Naive thymus-derived CD4-positive, alpha-beta T cell (primary cell): ENCODE measurements at regions of chr15 and their contacts with region 1.

Region 1: GRCh38 chr15:79989682-79990081 is 18.7 kb upstream of the BCL2A1 start:
- DNase-seq: no peak
- ATAC-seq: peak; percentile 71
- H3K4me3 ChIP-seq: no peak overlapping the region
- H3K4me3 Mint-ChIP-seq: no peak overlapping the region
- H3K27ac ChIP-seq: no peak overlapping the region
- H3K27ac Mint-ChIP-seq: peak overlapping the region in 1 of 9 donors; percentile 9
- H3K4me1 ChIP-seq: no peaks in the 10 kb centered on the region
- H3K4me1 Mint-ChIP-seq: peaks cover 0 to 7% (median 5%) of the 10 kb centered on the region in 7 donors
- H3K27me3 ChIP-seq: no peaks in the 10 kb centered on the region
- H3K27me3 Mint-ChIP-seq: no peaks in the 10 kb centered on the region

Region 2: GRCh38 chr15:79673416-79674123 is 316.1 kb before region 1 on chr15:
- CTCF ChIA-PET with region 1: no interaction called
- POLR2A ChIA-PET with region 1: no interaction called
- intact Hi-C with region 1: loop called in 1 of 2 experiments (anchors 10 kb)
- DNase-seq: no peak
- ATAC-seq: no peak
- H3K4me3 ChIP-seq: no peak overlapping the region
- H3K4me3 Mint-ChIP-seq: no peak overlapping the region
- H3K27ac ChIP-seq: no peak overlapping the region
- H3K27ac Mint-ChIP-seq: no peak overlapping the region
- H3K4me1 ChIP-seq: no peaks in the 10 kb centered on the region
- H3K4me1 Mint-ChIP-seq: peaks cover 0 to 5% (median 0%) of the 10 kb centered on the region in 7 donors
- H3K27me3 ChIP-seq: no peaks in the 10 kb centered on the region
- H3K27me3 Mint-ChIP-seq: peaks cover 17 to 48% (median 32%) of the 10 kb centered on the region in 5 donors

Region 3: DNA sequence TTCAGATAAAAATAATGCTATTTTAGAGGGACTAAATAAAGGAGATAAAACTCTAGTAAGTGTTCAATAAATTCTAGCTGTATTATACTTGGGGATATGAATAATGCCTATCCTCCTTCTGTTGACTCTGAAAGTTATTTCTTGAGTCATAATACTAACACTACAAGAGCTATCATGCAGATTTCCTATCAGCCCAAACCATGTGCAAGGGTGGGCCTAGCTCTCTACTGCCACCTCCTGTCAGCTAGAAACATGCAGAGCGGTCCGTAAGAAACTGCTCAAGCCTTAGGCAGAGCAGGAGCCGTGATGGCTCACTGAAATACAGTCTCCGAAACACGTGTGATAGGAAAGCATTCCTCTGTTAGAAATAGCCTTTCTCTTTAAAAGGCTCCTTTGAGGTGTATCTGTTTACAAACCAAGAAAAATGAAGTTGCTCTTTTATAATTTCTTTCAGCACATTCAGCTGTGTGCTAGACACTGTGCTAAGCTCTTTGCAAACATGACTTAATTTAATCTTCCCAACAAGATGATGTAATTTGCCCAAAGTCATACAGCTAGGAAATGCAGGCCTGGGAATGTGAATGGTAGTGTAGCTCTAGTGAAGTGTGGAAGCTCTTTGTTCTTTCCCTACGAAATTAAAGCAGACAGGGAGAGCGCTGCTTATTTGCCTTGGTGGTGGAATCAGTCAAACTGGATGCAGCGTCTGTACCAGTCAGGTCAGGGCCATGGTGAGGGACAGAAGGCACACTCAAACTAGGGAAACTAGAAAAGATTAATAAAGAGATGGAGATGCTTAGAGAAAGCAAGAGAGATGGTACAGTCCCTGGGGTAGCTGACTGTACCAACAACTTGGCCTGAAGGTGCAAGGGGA is 136.0 kb before region 1 on chr15:
- CTCF ChIA-PET with region 1: interaction called, 14 read pairs
- POLR2A ChIA-PET with region 1: no interaction called
- intact Hi-C with region 1: loop called (anchors 1 kb)
- DNase-seq: peak in 8 of 9 donors; percentile 15 to 61 (median 49)
- ATAC-seq: peak; percentile 97
- H3K4me3 ChIP-seq: no peak overlapping the region
- H3K4me3 Mint-ChIP-seq: no peak overlapping the region
- H3K27ac ChIP-seq: no peak overlapping the region
- H3K27ac Mint-ChIP-seq: peak overlapping the region in 4 of 9 donors; percentile 0 to 47 (median 30)
- H3K4me1 ChIP-seq: no peaks in the 10 kb centered on the region
- H3K4me1 Mint-ChIP-seq: peaks cover 6 to 43% (median 32%) of the 10 kb centered on the region in 7 donors
- H3K27me3 ChIP-seq: no peaks in the 10 kb centered on the region
- H3K27me3 Mint-ChIP-seq: no peaks in the 10 kb centered on the region

Region 4: DNA sequence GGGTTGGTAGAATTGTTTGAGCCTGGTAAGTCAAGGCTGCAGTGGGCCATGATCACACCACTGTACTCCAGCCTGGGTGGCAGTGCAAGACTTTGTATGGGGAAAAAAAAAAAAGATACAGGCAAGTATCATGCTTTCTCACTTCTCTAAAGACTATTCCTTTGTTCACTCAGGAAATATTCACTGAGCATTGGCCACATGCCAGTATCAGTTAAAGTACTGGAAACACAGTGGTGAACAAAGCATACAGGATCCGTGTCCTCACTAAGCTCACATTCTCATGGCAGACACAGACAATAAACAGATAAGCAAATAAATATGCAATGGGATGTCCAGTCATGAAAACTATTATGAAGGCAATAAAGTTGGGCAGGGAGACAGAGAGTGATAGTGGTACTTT is 87.7 kb before region 1 on chr15:
- CTCF ChIA-PET with region 1: interaction called, 10 read pairs
- POLR2A ChIA-PET with region 1: interaction called, 27 read pairs
- intact Hi-C with region 1: loop called in 1 of 2 experiments (anchors 1 kb)
- DNase-seq: no peak
- ATAC-seq: no peak
- H3K4me3 ChIP-seq: no peak overlapping the region
- H3K4me3 Mint-ChIP-seq: no peak overlapping the region
- H3K27ac ChIP-seq: no peak overlapping the region
- H3K27ac Mint-ChIP-seq: peak overlapping the region in 1 of 9 donors; percentile 25
- H3K4me1 ChIP-seq: peaks cover 6 to 8% of the 10 kb centered on the region in 2 donors
- H3K4me1 Mint-ChIP-seq: peaks cover 0 to 42% (median 13%) of the 10 kb centered on the region in 7 donors
- H3K27me3 ChIP-seq: no peaks in the 10 kb centered on the region
- H3K27me3 Mint-ChIP-seq: no peaks in the 10 kb centered on the region

Region 5: GRCh38 chr15:79953951-79954444 is 35.7 kb before region 1 on chr15:
- CTCF ChIA-PET with region 1: interaction called, 4 read pairs
- POLR2A ChIA-PET with region 1: interaction called, 3 read pairs
- intact Hi-C with region 1: loop called in 1 of 2 experiments (anchors 5 kb)
- DNase-seq: peak in 2 of 9 donors; percentile 7 to 27
- ATAC-seq: peak; percentile 82
- H3K4me3 ChIP-seq: no peak overlapping the region
- H3K4me3 Mint-ChIP-seq: peak overlapping the region in 2 of 10 donors; percentile 0 to 16
- H3K27ac ChIP-seq: no peak overlapping the region
- H3K27ac Mint-ChIP-seq: peak overlapping the region in 7 of 9 donors; percentile 1 to 79 (median 62)
- H3K4me1 ChIP-seq: peaks cover 0 to 10% of the 10 kb centered on the region in 2 donors
- H3K4me1 Mint-ChIP-seq: peaks cover 14 to 26% (median 21%) of the 10 kb centered on the region in 7 donors
- H3K27me3 ChIP-seq: no peaks in the 10 kb centered on the region
- H3K27me3 Mint-ChIP-seq: no peaks in the 10 kb centered on the region

Region 6: GRCh38 chr15:80173022-80173759 is 183.5 kb after region 1 on chr15:
- CTCF ChIA-PET with region 1: interaction called, 5 read pairs
- POLR2A ChIA-PET with region 1: no interaction called
- intact Hi-C with region 1: loop called (anchors 1 to 2 kb)
- DNase-seq: peak; percentile 44 to 71 (median 64)
- ATAC-seq: peak; percentile 84
- H3K4me3 ChIP-seq: no peak overlapping the region
- H3K4me3 Mint-ChIP-seq: peak overlapping the region in 1 of 10 donors; percentile 5
- H3K27ac ChIP-seq: no peak overlapping the region
- H3K27ac Mint-ChIP-seq: peak overlapping the region in 2 of 9 donors; percentile 5 to 55
- H3K4me1 ChIP-seq: no peaks in the 10 kb centered on the region
- H3K4me1 Mint-ChIP-seq: peaks cover 0 to 2% (median 0%) of the 10 kb centered on the region in 7 donors
- H3K27me3 ChIP-seq: no peaks in the 10 kb centered on the region
- H3K27me3 Mint-ChIP-seq: no peaks in the 10 kb centered on the region